Activated CD4-positive, alpha-beta T cell treated with anti-CD3 and anti-CD28 coated beads, Interleukin-2, amount 10 ng/mL, durations not matched to agents 24 days and 14 days (primary cell): ENCODE measurements at regions of chr6 and their contacts with region 1.

Region 1: DNA sequence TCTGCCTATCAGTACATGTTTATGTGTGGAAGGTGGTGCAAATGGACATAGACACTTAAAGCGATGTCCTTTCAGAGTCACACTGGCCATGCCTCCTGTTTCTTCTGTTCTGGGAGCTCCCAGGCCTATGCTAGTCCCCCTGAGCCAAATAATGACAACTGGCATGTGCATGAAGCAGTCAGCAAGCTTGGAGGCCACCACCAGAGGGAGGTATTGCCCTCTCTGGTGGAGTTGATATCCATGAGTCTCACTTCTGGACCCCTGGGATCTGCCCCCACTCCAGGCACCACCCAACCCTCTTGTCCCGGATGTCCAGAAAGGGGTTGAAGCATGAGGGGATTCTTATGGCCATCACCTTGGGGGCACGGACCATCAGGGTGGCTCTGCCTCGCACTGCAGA is 172.2 kb downstream of the AIG1 start:
- DNase-seq: peak; percentile 74
- H3K4me3 Mint-ChIP-seq: no peak overlapping the region
- H3K27ac Mint-ChIP-seq: no peak overlapping the region
- H3K4me1 Mint-ChIP-seq: no peaks in the 10 kb centered on the region
- H3K27me3 Mint-ChIP-seq: no peaks in the 10 kb centered on the region

Region 2: DNA sequence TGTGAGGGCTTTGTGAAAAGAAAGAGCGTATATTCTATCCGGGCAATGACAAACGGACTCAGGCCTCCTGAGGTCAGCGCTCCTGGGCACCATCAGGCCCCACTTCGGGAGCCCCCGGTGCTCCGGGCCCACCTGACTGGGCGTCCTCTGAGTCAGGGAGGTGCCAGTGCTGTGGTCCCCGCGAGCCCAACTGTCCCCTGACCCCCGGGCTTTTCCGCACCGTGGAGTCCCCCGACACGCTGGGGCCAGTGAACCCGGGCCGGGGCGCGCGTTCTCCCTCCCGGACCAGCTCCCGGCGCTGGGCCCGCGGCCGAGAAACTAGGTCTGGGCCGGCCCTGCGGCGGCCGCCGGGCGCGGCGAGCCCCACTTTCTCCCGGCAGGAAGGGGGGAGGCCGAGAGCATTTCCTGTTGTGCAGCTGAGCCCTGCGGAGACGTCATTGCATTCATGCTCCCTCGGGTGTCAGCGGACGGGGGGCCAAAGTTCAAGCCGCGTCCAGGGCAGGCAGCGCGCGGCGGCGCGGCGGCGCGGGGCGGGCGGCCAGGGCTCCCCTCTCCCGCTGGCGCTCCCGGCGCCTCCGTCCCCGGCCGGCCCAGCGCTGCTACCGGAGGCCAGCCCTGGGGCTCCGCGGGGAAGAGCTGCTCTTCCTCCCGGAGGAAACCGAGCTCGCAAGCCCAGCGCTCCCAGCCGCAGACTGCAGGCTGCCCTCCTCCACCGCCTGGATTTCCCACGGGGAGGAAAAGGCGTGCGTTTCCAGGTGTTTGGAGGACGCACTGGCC is 306.2 kb before region 1 on chr6:
- intact Hi-C with region 1: no loop called
- DNase-seq: peak; percentile 94
- H3K4me3 Mint-ChIP-seq: peak overlapping the region; percentile 95
- H3K27ac Mint-ChIP-seq: peak overlapping the region; percentile 92
- H3K4me1 Mint-ChIP-seq: peaks cover 43% of the 10 kb centered on the region
- H3K27me3 Mint-ChIP-seq: no peaks in the 10 kb centered on the region

Region 3: GRCh38 chr6:143374014-143374413 is 141.2 kb after region 1 on chr6:
- intact Hi-C with region 1: no loop called
- DNase-seq: peak; percentile 34
- H3K4me3 Mint-ChIP-seq: no peak overlapping the region
- H3K27ac Mint-ChIP-seq: no peak overlapping the region
- H3K4me1 Mint-ChIP-seq: no peaks in the 10 kb centered on the region
- H3K27me3 Mint-ChIP-seq: peaks cover 10% of the 10 kb centered on the region

Region 4: DNA sequence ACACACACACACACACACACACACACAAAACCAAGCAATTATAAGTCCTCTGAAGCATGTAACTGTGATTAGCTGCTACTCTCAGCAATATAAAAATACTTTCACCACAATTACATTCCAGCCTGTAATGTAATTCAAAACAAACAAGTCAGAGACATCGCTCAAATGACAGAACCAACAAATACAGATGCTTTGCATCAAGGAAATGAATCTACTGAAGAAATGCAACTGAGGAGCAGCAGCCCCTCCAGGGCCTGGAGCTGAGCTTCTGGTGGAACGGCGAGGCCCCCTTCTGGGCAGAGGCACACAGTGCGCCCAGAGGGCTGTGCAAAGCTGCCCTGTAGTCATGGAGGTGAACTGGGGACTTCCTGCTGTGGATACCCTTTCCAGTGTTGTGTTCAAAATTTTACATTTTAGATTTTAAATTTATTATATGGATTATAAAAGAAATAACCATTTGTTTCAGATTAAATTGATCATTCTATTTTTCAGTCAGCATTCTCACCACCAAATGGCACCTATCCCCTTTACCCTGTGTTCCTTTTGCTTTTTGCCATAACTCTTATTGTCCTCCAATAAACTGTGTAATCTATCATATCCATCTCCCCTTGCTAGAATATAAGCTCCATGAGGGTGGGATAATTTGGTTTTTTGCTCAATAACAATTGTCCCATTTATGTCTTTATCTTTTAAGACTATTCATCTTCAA is 194.4 kb after region 1 on chr6:
- intact Hi-C with region 1: loop called (anchors 1 kb)
- DNase-seq: peak; percentile 92
- H3K4me3 Mint-ChIP-seq: no peak overlapping the region
- H3K27ac Mint-ChIP-seq: no peak overlapping the region
- H3K4me1 Mint-ChIP-seq: peaks cover 9% of the 10 kb centered on the region
- H3K27me3 Mint-ChIP-seq: no peaks in the 10 kb centered on the region

Region 5: GRCh38 chr6:143700684-143701348 is 468.0 kb after region 1 on chr6:
- intact Hi-C with region 1: no loop called
- DNase-seq: no peak
- H3K4me3 Mint-ChIP-seq: no peak overlapping the region
- H3K27ac Mint-ChIP-seq: no peak overlapping the region
- H3K4me1 Mint-ChIP-seq: peaks cover 7% of the 10 kb centered on the region
- H3K27me3 Mint-ChIP-seq: no peaks in the 10 kb centered on the region